AG04450 (cell line): ENCODE measurements at regions of chr20 and their contacts with region 1.

Region 1: DNA sequence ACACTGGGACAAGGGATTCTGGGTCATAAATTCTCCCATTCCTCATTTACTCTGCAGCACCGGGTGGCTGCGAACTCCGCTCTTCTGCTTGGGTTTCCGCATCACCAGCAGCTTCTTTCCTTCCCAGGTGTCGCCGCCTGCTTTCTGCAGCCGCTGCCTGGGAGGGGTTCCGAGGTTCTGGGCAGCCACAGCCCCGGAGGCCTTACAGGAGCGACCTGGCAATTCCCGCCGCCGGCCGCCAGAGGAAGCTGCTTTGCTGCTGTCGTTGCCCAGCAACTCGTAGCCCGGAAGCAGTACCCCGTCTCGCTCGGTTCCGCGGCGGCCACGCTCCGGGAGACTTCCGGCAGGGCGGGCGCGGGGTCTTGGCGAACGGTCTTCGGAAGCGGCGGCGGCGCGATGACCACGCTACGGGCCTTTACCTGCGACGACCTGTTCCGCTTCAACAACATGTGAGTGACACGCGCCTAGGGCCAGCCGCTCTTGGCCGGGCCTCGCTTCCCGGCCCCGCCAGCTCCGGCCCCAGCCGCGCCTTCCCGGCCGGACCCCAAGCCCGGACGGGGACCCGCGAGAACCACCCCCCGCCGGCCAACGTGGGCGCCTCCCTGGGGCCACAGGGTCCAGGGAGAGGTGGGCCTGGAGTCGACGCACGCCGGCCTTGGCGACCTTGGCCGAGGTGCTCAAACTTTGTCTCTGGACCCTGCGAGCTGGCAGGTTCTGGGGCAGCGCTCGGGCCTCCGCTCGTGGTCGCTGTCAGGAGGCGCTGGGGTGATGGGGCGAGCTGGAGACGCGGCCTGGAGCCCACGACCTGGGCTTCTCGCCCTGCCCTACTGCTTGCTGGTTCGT is at the start of gene NAA20:
- DNase-seq: peak; percentile 70
- H3K4me3 ChIP-seq: peak within 1 kb of the TSS; percentile 87
- H3K27ac ChIP-seq: peak within 1 kb of the TSS; percentile 21
- H3K27me3 ChIP-seq: no peaks in the 10 kb centered on the region
- CTCF ChIP-seq: peak; percentile 76
- polyA plus RNA-seq, gene NAA20: 59.6 and 85.1 TPM in 2 replicates

Region 2: GRCh38 chr20:19205977-19206396 is 811.2 kb before region 1 on chr20:
- CTCF ChIA-PET with region 1: no interaction called
- POLR2A ChIA-PET with region 1: no interaction called
- DNase-seq: no peak
- H3K4me3 ChIP-seq: no peak overlapping the region
- H3K27ac ChIP-seq: no peak overlapping the region
- H3K27me3 ChIP-seq: peaks cover 2% of the 10 kb centered on the region
- CTCF ChIP-seq: peak; percentile 74

Region 3: GRCh38 chr20:19725814-19726525 is 291.3 kb before region 1 on chr20:
- CTCF ChIA-PET with region 1: no interaction called
- POLR2A ChIA-PET with region 1: no interaction called
- DNase-seq: no peak
- H3K4me3 ChIP-seq: no peak overlapping the region
- H3K27ac ChIP-seq: no peak overlapping the region
- H3K27me3 ChIP-seq: peaks cover 9% of the 10 kb centered on the region
- CTCF ChIP-seq: no peak

Region 4: DNA sequence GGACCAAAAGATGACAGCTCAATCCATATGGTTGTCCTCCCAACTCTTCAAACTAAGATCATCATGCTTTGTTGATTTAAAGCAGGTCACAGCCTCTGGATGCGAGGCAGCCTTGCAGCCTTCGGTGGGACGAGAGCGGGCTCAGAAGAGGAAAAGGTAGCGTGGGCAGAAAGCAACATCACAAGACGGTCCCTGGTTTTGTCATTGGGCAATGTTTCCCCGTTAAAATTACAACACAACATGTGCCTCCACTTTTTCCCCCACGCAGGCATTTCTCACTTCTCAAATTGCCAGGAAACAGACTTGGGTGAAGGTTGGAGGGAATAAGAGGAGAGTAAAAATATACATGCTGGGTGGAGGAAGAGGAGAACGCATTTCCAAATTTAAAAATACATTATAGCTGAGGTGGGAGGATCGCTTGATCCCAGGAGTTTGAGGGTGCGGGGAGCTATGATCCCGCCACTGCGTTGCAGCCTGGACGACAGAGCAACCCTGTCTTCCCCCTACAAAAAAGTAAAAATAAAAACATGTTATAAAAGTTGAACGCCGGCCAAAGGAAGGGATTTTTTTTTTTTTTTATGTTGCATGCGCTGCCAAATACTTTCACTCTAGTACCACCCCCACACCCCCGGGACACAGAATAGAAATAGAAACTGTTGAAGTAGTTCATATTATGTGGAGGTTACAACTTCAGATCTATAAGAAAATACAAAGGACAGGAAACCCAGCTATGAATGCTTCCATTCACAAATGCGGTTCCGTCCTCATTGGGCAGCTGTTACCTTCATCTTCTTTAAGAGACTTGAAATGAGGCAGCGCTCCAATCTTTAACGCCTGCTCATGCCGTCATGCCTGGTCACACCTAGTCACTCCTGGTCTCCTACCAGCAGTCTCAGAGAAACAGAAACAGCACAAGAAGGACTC is 13.9 kb before region 1 on chr20:
- CTCF ChIA-PET with region 1: interaction called, 12 read pairs
- POLR2A ChIA-PET with region 1: interaction called, 3 read pairs
- DNase-seq: no peak
- H3K4me3 ChIP-seq: no peak overlapping the region
- H3K27ac ChIP-seq: peak overlapping the region; percentile 49
- H3K27me3 ChIP-seq: no peaks in the 10 kb centered on the region
- CTCF ChIP-seq: no peak